ENCODE measurements at regions of chr9 and their contacts with region 1.

Region 1: DNA sequence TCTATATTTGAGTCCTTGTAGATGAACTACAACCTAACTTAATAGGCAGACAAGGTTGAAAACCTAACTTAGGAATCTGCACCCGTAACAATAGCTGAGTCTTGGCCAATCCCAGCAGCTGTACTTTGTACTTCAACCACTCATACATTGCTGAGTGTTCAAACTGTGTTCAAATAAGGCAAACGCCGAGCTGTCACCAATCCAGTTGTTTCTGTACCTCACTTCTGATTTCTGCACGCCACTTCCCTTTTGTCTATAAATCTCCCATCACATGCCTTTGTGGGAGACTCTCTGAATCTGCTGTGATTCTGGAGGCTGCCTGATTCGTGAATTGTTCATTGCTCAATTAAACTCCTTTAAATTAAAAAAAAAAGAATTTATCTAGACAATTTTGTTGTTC is 167.8 kb upstream of the TUT7 start:
- DNase-seq: no peak
- ATAC-seq: no peak
- H3K4me3 ChIP-seq: no peak overlapping the region
- H3K4me3 Mint-ChIP-seq: no peak overlapping the region
- H3K27ac ChIP-seq: no peak overlapping the region
- H3K27ac Mint-ChIP-seq: no peak overlapping the region
- H3K4me1 ChIP-seq: no peaks in the 10 kb centered on the region
- H3K4me1 Mint-ChIP-seq: no peaks in the 10 kb centered on the region
- H3K27me3 ChIP-seq: no peaks in the 10 kb centered on the region
- H3K27me3 Mint-ChIP-seq: peaks cover 5% of the 10 kb centered on the region
- CTCF ChIP-seq: no peak

Region 2: GRCh38 chr9:87529671-87530070 is 1007.7 kb after region 1 on chr9:
- CTCF ChIA-PET with region 1: no interaction called
- POLR2A ChIA-PET with region 1: no interaction called
- intact Hi-C with region 1: loop called in 1 of 2 experiments (anchors 5 kb)
- DNase-seq: no peak
- ATAC-seq: no peak
- H3K4me3 ChIP-seq: no peak overlapping the region
- H3K4me3 Mint-ChIP-seq: no peak overlapping the region
- H3K27ac ChIP-seq: no peak overlapping the region
- H3K27ac Mint-ChIP-seq: no peak overlapping the region
- H3K4me1 ChIP-seq: no peaks in the 10 kb centered on the region
- H3K4me1 Mint-ChIP-seq: no peaks in the 10 kb centered on the region
- H3K27me3 ChIP-seq: no peaks in the 10 kb centered on the region
- H3K27me3 Mint-ChIP-seq: no peaks in the 10 kb centered on the region
- CTCF ChIP-seq: no peak

Measured in CD8-positive, alpha-beta T cell (primary cell).